Dorsolateral prefrontal cortex (tissue), 120 donors: ENCODE measurements at regions of chr3 and their contacts with region 1.

Region 1: GRCh38 chr3:98817547-98818041 is 54.5 kb downstream of the ST3GAL6 start:
- DNase-seq: no peak
- H3K4me3 ChIP-seq: no peak overlapping the region
- H3K27ac ChIP-seq: peak overlapping the region in 2 of 59 donors; percentile 44 to 70
- H3K27me3 ChIP-seq: no peaks in the 10 kb centered on the region
- CTCF ChIP-seq: peak; percentile 78 to 99 (median 91)

Region 2: GRCh38 chr3:98039322-98040024 is 778.1 kb before region 1 on chr3:
- intact Hi-C with region 1: loop called (anchors 5 kb)
- DNase-seq: peak in 9 of 10 donors; percentile 16 to 76 (median 49)
- H3K4me3 ChIP-seq: peak overlapping the region; percentile 17 to 68 (median 52)
- H3K27ac ChIP-seq: peak overlapping the region in 27 of 59 donors; percentile 20 to 81 (median 59)
- H3K27me3 ChIP-seq: peaks cover 0 to 13% (median 0%) of the 10 kb centered on the region in 45 donors
- CTCF ChIP-seq: peak in 54 of 56 donors; percentile 84 to 100 (median 96)

Region 3: GRCh38 chr3:98522244-98523090 is 295.1 kb before region 1 on chr3 and contains the start of gene CLDND1:
- intact Hi-C with region 1: loop called in 1 of 2 experiments (anchors 10 kb)
- DNase-seq: peak; percentile 98 to 99 (median 99)
- H3K4me3 ChIP-seq: peak within 1 kb of the TSS; percentile 59 to 98 (median 85)
- H3K27ac ChIP-seq: peak within 1 kb of the TSS; percentile 89 to 100 (median 97)
- H3K27me3 ChIP-seq: no peaks in the 10 kb centered on the region
- CTCF ChIP-seq: peak in 23 of 56 donors; percentile 2 to 50 (median 29)
- total RNA-seq, gene CLDND1: 175 to 2,533 (median 594) TPM

Region 4: DNA sequence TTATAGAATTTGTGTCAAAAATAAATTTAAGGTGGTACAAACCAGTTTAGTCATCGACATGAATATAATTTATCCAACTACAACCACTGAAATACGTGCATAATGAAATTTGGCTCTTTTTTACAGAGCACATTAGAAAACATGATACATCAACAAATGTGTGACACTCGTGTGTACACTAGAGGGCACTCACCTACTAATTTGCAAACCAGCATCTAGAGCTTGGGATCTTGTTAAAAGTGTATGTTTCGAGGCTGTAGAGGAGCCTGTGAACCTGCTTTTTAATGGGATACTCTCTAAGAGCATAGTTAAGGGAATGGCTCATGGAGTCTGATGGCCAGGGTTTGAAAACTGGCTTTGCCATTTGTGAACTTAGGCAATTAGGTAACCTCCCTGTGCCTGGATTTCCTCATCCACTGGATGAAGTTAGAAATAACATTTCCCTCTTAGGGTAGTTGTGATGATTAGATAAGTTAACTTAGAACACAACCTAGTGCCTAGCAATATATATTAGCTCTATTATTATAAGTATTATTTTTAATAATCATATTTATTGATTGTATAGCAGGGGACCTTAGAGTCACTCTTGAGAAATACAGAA is 215.4 kb before region 1 on chr3:
- intact Hi-C with region 1: loop called in 1 of 2 experiments (anchors 2 kb)
- DNase-seq: peak in 3 of 10 donors; percentile 15 to 64 (median 41)
- H3K4me3 ChIP-seq: no peak overlapping the region
- H3K27ac ChIP-seq: peak overlapping the region in 11 of 59 donors; percentile 3 to 54 (median 16)
- H3K27me3 ChIP-seq: no peaks in the 10 kb centered on the region
- CTCF ChIP-seq: peak; percentile 67 to 97 (median 84)

Region 5: DNA sequence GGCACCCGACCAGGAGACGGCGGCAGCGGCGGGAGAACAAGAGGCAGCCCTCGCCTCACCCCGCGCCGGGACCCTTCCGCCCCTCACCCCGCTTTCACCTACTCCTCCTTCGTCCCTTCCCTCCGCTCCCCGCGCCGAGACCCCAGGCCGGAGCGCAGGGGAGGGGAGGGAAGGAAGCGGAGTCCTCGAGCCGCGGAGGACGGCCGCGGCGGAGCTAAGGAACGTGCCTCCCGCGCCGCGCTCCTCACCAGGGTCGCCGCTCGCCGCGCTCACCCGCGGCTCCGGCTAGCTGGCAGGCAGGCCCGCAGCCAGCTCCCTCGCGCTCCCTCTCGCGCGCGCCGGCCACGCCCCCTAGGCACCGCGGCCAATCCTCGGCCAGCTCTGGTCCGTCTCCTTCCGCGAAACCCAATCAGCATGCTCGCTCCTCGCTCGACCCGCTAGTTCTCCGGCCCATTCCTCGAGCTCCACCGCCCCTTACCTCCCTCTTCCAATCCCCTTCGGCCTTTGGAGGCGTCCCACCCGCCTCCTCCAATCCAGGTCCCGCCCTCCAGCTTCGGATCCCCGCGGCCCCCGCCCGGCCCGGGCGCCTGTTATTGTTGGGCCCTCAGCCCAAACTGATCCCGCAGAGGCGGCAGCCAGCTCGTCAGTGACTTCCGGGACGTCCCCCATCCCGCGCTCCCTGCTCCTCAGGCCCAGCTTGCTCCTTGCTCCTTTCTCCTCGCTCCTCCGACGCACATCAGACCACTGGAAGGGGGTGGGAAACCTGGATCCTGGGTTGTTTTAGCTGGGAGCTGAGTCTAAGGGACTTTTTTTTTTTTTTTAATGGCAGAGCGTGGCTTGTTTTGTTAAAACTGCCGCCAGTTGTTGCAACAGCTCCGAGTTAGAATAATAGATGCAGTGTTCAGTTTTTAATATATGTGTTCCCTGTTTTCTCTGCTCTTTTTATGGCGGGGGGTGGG is 84.1 kb after region 1 on chr3 and contains the start of gene DCBLD2:
- intact Hi-C with region 1: loop called (anchors 5 kb)
- DNase-seq: peak; percentile 95 to 99 (median 98)
- H3K4me3 ChIP-seq: peak within 1 kb of the TSS; percentile 66 to 98 (median 89)
- H3K27ac ChIP-seq: peak within 1 kb of the TSS; percentile 59 to 97 (median 92)
- H3K27me3 ChIP-seq: no peaks in the 10 kb centered on the region
- CTCF ChIP-seq: peak in 15 of 56 donors; percentile 7 to 48 (median 18)
- total RNA-seq, gene DCBLD2: 13.2 to 33.0 (median 22.0) TPM

Region 6: DNA sequence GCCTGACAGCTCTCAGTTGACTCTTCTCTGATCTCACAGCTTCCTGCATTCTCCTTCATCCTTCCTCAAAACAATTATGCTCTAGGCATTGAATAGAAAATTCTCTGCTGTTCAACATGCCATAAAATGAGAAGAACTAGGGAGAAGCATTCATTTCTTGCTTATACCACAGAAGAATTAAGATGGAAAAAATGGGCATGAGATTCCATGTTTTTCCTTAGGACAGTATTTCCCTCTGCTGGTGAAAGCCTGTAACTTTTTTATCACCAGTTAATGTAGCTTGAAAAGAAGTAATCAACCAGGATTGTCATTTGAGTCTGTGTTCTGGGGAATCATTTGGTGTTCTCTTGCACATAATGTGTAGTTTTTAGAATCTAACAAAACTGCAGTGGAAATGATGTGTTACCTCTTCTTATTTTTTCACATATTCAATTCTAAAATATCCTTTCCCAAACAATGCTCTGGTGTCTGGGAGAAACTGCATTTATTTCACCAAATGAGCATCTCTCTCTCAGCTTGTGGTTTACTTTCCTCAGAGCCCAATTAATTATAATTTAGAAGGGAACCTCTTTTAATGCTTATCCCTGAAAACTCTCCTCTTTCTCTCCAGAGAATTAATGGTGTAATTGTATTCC is 176.7 kb after region 1 on chr3:
- intact Hi-C with region 1: loop called (anchors 1 to 5 kb)
- DNase-seq: no peak
- H3K4me3 ChIP-seq: no peak overlapping the region
- H3K27ac ChIP-seq: no peak overlapping the region
- H3K27me3 ChIP-seq: no peaks in the 10 kb centered on the region
- CTCF ChIP-seq: peak; percentile 72 to 94 (median 86)